ENCODE measurements at regions of chr1 and their contacts with region 1.

Region 1: DNA sequence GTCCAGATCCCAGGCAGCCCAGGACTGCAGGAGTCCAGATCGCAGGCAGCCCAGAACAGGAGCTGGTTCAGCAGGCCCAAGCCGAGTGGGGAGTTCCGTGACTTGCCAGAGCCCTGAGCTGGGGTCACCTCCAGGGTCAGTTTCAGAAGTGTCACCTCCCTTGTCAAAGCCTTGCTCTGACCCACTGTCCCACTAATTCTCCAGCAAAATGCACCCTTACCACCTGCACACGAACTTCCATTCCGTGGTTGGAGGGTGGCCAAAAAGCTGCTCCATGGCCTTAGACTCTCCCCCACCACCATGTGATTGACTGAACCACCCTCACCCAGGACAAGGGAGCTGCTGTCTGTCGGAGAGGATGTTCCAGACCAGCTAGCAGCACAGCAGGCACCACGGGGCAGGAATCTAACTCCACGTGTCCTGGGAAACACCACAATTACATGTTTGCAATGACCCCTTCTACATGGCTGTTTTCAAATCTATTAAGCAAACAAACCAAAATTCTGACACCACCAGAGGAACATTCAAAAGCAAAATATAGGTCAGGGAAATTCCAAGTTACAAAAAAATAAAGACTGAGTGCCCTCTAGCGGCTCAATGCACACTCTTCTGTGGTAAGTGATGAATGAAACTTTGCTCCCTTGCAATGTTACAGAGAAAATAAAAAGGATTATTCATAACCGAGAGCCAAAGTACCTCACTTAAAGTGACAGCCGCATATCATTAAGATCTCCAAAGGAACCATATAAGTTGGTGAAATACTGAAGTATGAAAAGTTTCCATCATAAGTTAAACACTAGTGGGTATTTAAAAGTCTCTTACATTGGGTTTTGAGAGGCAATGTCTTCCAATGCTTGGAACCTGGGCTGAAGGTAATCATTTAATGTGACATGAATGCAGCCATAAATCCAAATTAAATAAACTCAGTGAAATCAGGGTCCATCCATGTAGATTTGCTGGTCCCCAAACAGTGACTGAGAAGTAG is 76.3 kb downstream of the NPHP4 start:
- DNase-seq: peak; percentile 16 to 25
- ATAC-seq: peak; percentile 81 to 85; a peak in 5 of 6 replicates
- H3K4me3 ChIP-seq: no peak overlapping the region
- H3K27ac ChIP-seq: no peak overlapping the region
- H3K4me1 ChIP-seq: no peaks in the 10 kb centered on the region
- CTCF ChIP-seq: peak; percentile 63
- EP300 ChIP-seq: no peak
- POLR2A ChIP-seq: no peak
- RAD21 ChIP-seq: peak; percentile 42 to 53

Region 2: GRCh38 chr1:5225687-5226389 is 690.0 kb before region 1 on chr1:
- CTCF ChIA-PET with region 1: no interaction called
- POLR2A ChIA-PET with region 1: no interaction called
- DNase-seq: no peak
- ATAC-seq: no peak
- H3K4me3 ChIP-seq: no peak overlapping the region
- H3K27ac ChIP-seq: no peak overlapping the region
- H3K4me1 ChIP-seq: no peaks in the 10 kb centered on the region
- CTCF ChIP-seq: no peak
- EP300 ChIP-seq: no peak
- POLR2A ChIP-seq: no peak
- RAD21 ChIP-seq: no peak

Region 3: DNA sequence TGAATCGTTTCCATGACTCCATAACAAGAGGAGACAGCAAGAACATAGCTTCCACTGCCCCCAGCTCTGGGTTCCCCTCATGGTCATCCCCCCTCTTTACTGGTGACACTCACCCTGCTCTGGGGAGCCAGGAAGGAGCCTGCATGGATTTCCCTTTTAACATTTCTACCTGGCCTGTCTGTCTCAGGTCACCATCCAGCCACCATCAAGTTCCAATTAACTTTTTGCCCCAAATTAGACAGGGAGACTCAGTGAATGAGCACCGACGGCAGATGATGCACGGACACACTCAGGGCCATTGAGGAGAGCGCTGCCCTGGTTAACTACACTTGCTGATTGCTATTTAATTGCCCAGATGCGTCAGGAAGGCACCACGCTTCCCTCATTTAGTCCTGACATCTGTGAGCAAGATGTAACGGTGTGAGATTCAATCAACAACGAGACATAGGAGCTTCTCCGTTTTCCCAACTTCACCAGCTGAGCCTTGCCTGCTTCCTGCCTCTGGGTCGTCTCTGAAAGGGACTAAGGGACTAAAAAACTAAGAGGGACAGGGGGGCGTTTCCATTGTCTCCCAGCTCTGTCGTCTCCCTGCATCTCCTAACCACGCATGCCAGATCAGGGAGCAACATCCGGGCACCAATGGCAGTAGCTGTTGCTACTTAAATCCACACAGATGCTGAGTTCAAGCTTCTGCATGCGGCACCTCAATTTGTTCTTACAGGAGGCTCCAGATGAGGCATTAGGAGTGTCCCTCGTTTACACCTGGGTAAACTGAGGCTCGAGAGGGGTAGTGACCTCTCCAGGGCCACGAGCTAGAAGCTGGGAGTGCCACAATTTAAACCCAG is 350.4 kb before region 1 on chr1:
- CTCF ChIA-PET with region 1: no interaction called
- POLR2A ChIA-PET with region 1: no interaction called
- DNase-seq: no peak
- ATAC-seq: no peak
- H3K4me3 ChIP-seq: no peak overlapping the region
- H3K27ac ChIP-seq: no peak overlapping the region
- H3K4me1 ChIP-seq: no peaks in the 10 kb centered on the region
- CTCF ChIP-seq: no peak
- EP300 ChIP-seq: no peak
- POLR2A ChIP-seq: no peak
- RAD21 ChIP-seq: no peak

Region 4: GRCh38 chr1:5905436-5905835 is 10.4 kb before region 1 on chr1:
- CTCF ChIA-PET with region 1: interaction called, 18 read pairs
- POLR2A ChIA-PET with region 1: no interaction called
- DNase-seq: no peak
- ATAC-seq: no peak
- H3K4me3 ChIP-seq: no peak overlapping the region
- H3K27ac ChIP-seq: no peak overlapping the region
- H3K4me1 ChIP-seq: no peaks in the 10 kb centered on the region
- CTCF ChIP-seq: no peak
- EP300 ChIP-seq: no peak
- POLR2A ChIP-seq: no peak
- RAD21 ChIP-seq: no peak

Region 5: DNA sequence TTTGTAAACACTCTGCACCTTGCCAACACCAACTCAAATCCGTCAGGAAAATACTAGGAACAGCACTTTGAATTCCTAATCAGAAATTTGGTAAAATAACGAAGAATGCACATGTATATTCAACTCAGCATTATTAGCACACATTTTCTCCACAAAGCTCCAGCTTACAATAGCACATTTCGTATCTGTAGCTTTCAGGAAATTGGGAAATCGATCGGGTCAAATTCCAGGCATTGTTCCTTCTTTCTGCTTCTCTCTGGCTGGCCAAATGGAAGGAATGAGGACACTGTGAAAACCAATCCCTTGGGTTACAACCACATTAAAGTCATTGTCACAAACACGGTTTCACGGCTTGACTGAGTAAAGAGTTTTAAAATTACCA is 17.8 kb after region 1 on chr1:
- CTCF ChIA-PET with region 1: interaction called, 10 read pairs
- POLR2A ChIA-PET with region 1: no interaction called
- DNase-seq: no peak
- ATAC-seq: no peak
- H3K4me3 ChIP-seq: no peak overlapping the region
- H3K27ac ChIP-seq: no peak overlapping the region
- H3K4me1 ChIP-seq: no peaks in the 10 kb centered on the region
- CTCF ChIP-seq: no peak
- EP300 ChIP-seq: no peak
- POLR2A ChIP-seq: no peak
- RAD21 ChIP-seq: no peak

Measured in A549 (cell line).